ENCODE measurements at regions of chr11 and their contacts with region 1.

Region 1: DNA sequence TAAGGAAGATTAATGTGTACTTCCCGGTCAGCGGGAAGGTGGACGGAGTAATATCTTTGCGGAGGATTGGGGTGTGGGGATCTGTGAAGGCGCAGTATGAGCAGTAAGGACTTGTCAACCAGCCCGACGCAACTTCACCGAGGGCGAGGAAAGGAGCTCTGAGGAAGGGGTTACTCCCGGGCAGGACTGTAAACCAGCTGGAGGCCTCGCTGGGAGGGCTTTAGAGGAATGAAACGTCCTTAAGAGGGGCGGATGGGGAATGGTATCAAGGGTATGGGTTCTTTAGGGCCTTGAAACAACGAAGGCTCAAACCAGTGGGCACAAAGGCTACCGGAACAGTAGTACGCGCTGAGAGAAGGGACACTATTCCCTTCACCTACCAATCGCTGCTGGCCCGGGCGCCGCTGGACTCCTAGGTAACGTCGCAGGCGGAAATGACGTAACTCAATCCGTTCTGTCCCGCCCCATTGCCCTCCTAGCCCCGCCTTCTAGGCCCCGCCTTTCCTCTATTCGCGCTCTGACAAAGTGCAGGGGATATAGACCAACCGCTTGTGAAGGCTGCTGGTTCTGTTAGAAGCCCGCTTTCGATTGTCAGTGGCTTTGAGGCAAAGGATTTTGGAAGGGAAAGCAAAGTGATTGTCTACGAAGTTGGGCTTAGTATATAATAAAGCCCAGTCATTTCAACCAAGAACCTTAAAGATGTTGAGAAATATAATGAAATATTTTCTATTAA is at the start of gene C11orf65:
- DNase-seq: peak; percentile 97
- H3K4me3 ChIP-seq: peak within 1 kb of the TSS; percentile 52 to 65
- H3K27ac ChIP-seq: peak within 1 kb of the TSS; percentile 99
- H3K4me1 ChIP-seq: no peaks in the 10 kb centered on the region
- H3K27me3 ChIP-seq: no peaks in the 10 kb centered on the region
- CTCF ChIP-seq: no peak
- POLR2A ChIP-seq: peak; percentile 98
- total RNA-seq, gene C11orf65: 0.18 to 4.3 TPM

Region 2: DNA sequence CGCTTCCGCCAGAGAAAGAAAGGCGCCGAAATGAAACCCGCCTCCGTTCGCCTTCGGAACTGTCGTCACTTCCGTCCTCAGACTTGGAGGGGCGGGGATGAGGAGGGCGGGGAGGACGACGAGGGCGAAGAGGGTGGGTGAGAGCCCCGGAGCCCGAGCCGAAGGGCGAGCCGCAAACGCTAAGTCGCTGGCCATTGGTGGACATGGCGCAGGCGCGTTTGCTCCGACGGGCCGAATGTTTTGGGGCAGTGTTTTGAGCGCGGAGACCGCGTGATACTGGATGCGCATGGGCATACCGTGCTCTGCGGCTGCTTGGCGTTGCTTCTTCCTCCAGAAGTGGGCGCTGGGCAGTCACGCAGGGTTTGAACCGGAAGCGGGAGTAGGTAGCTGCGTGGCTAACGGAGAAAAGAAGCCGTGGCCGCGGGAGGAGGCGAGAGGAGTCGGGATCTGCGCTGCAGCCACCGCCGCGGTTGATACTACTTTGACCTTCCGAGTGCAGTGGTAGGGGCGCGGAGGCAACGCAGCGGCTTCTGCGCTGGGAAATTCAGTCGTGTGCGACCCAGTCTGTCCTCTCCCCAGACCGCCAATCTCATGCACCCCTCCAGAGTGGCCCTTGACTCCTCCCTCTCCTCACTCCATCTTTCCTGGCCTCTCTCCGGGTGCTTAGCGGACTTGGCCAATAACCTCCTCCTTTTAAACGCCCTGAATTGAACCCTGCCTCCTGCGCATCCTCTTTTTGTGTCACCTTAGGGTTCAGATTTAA is 244.4 kb before region 1 on chr11 and contains the start of gene ATM:
- intact Hi-C with region 1: loop called (anchors 2 kb)
- DNase-seq: peak; percentile 99
- H3K4me3 ChIP-seq: peak within 1 kb of the TSS; percentile 69 to 76
- H3K27ac ChIP-seq: peak within 1 kb of the TSS; percentile 89 to 97
- H3K4me1 ChIP-seq: no peaks in the 10 kb centered on the region
- H3K27me3 ChIP-seq: no peaks in the 10 kb centered on the region
- CTCF ChIP-seq: peak; percentile 58 to 91 (median 77)
- POLR2A ChIP-seq: peak; percentile 6
- total RNA-seq, gene ATM: 32.9 to 80.9 TPM

Region 3: DNA sequence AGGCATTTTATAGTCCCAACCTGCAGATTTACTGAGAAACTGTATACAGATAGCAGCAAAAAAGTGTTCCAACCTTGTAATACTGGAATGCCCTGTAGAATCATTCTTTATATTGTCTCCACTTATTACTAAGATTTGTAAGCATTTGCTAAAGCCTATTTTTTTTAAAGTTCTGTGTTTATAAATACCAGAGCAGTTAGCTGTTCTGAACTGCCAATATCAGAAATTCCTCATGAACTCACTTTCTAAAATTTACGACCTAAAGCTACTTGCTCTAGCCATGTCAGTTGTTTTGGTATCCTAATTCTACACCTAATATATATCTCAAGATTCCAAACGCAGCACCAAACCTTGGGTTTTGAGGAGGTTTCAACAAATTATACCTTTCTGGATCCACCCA is 103.1 kb before region 1 on chr11:
- intact Hi-C with region 1: no loop called
- DNase-seq: no peak
- H3K4me3 ChIP-seq: no peak overlapping the region
- H3K27ac ChIP-seq: no peak overlapping the region
- H3K4me1 ChIP-seq: no peaks in the 10 kb centered on the region
- H3K27me3 ChIP-seq: no peaks in the 10 kb centered on the region
- CTCF ChIP-seq: no peak
- POLR2A ChIP-seq: no peak

Region 4: GRCh38 chr11:108574675-108575074 is 107.4 kb after region 1 on chr11:
- intact Hi-C with region 1: no loop called
- DNase-seq: no peak
- H3K4me3 ChIP-seq: no peak overlapping the region
- H3K27ac ChIP-seq: no peak overlapping the region
- H3K4me1 ChIP-seq: no peaks in the 10 kb centered on the region
- H3K27me3 ChIP-seq: no peaks in the 10 kb centered on the region
- CTCF ChIP-seq: no peak
- POLR2A ChIP-seq: no peak

Region 5: DNA sequence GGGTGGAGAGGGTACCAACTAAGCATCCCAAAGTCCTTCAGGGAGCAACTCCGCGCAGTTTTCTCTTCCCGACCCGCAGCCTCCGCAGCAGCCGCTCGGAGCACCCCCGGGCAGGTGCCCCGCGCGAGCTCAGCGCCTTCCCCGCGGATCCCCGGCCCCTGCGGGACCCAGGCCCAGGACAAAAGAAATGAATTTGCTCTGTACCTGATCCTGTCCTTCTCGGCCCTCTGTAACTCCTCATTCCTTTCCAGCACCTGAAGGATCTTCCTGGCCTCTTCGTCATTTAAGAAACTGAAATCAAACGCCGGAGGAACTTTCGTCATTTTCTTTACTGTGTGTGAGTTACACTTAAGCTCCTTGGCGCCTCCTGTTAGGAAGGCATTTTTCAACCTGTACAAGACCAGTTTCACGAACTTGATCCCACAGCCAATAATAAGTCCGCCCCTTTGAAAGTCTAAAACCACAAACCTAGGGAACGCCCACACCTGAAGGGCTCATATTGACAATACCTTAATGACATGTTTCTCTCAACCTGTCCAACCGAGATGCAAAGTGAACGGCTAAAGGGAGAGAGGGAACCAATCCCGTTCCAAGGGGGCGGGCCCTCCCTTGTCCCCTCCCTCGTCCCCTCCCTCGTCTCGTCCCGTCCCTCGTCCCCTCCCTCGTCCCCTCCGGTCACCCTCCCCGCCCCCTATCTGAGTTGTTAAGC is 126.1 kb after region 1 on chr11 and contains the start of gene EXPH5:
- intact Hi-C with region 1: loop called (anchors 5 kb)
- DNase-seq: peak; percentile 96
- H3K4me3 ChIP-seq: peak within 1 kb of the TSS; percentile 60 to 61
- H3K27ac ChIP-seq: peak within 1 kb of the TSS; percentile 81 to 90
- H3K4me1 ChIP-seq: no peaks in the 10 kb centered on the region
- H3K27me3 ChIP-seq: no peaks in the 10 kb centered on the region
- CTCF ChIP-seq: no peak
- POLR2A ChIP-seq: peak; percentile 85
- total RNA-seq, gene EXPH5: 6.6 to 17.3 TPM

Measured in prostate gland (tissue), 2 donors.